ENCODE measurements at regions of chr5 and their contacts with region 1.

Region 1: GRCh38 chr5:16791036-16791705 is 144.9 kb downstream of the MYO10 start:
- DNase-seq: peak; percentile 55 to 66 (median 64)
- ATAC-seq: peak; percentile 75
- H3K4me3 ChIP-seq: no peak overlapping the region
- H3K27ac ChIP-seq: no peak overlapping the region
- H3K4me1 ChIP-seq: no peaks in the 10 kb centered on the region
- H3K27me3 ChIP-seq: peaks cover 0 to 12% of the 10 kb centered on the region in 2 experiments; a peak in 2 of 5 replicates
- CTCF ChIP-seq: peak; percentile 54 to 80 (median 62); a peak in 5 of 6 replicates
- EP300 ChIP-seq: no peak
- POLR2A ChIP-seq: no peak
- RAD21 ChIP-seq: peak; percentile 74 to 82

Region 2: GRCh38 chr5:16450163-16450562 is 341.0 kb before region 1 on chr5:
- CTCF ChIA-PET with region 1: no interaction called
- POLR2A ChIA-PET with region 1: no interaction called
- in situ Hi-C with region 1: no loop called
- intact Hi-C with region 1: no loop called
- DNase-seq: no peak
- ATAC-seq: no peak
- H3K4me3 ChIP-seq: no peak overlapping the region
- H3K27ac ChIP-seq: no peak overlapping the region
- H3K4me1 ChIP-seq: peaks cover 0 to 4% of the 10 kb centered on the region in 2 experiments; a peak in 2 of 5 replicates
- H3K27me3 ChIP-seq: no peaks in the 10 kb centered on the region
- CTCF ChIP-seq: no peak
- EP300 ChIP-seq: no peak
- POLR2A ChIP-seq: no peak
- RAD21 ChIP-seq: no peak

Region 3: GRCh38 chr5:16642862-16643261 is 148.3 kb before region 1 on chr5:
- CTCF ChIA-PET with region 1: no interaction called
- POLR2A ChIA-PET with region 1: no interaction called
- in situ Hi-C with region 1: no loop called
- intact Hi-C with region 1: no loop called
- DNase-seq: no peak
- ATAC-seq: no peak
- H3K4me3 ChIP-seq: no peak overlapping the region
- H3K27ac ChIP-seq: no peak overlapping the region
- H3K4me1 ChIP-seq: no peaks in the 10 kb centered on the region
- H3K27me3 ChIP-seq: no peaks in the 10 kb centered on the region; a peak in 1 of 5 replicates
- CTCF ChIP-seq: no peak
- EP300 ChIP-seq: no peak
- POLR2A ChIP-seq: no peak
- RAD21 ChIP-seq: no peak

Region 4: DNA sequence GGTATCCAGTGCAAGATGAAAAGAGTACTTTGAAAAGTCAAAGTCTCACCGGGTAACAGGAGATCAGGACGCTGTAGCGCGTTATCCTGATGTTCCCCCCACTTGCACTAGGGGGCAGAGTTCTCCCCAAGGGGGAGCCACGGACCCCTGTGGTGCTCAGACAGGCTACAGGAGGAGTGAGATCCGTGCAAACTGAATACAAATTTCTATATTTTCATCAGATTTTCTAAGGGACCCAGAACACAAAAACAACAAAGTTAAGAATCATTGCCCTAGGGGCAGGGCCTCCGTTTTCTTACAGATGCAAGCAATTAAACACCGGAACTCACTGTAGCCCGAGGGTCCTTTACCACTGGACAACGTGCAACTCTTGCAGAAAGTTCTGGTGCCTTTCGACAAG is 143.0 kb after region 1 on chr5:
- CTCF ChIA-PET with region 1: no interaction called
- POLR2A ChIA-PET with region 1: no interaction called
- in situ Hi-C with region 1: no loop called
- intact Hi-C with region 1: no loop called
- DNase-seq: peak; percentile 53 to 80 (median 70)
- ATAC-seq: peak; percentile 88
- H3K4me3 ChIP-seq: no peak overlapping the region
- H3K27ac ChIP-seq: no peak overlapping the region
- H3K4me1 ChIP-seq: peaks cover 0 to 13% of the 10 kb centered on the region in 2 experiments; a peak in 2 of 5 replicates
- H3K27me3 ChIP-seq: peaks cover 6 to 13% of the 10 kb centered on the region in 2 experiments; a peak in 2 of 5 replicates
- CTCF ChIP-seq: peak; percentile 61 to 76 (median 76)
- EP300 ChIP-seq: no peak
- POLR2A ChIP-seq: no peak
- RAD21 ChIP-seq: peak; percentile 29 to 41; a peak in 2 of 4 replicates

Region 5: DNA sequence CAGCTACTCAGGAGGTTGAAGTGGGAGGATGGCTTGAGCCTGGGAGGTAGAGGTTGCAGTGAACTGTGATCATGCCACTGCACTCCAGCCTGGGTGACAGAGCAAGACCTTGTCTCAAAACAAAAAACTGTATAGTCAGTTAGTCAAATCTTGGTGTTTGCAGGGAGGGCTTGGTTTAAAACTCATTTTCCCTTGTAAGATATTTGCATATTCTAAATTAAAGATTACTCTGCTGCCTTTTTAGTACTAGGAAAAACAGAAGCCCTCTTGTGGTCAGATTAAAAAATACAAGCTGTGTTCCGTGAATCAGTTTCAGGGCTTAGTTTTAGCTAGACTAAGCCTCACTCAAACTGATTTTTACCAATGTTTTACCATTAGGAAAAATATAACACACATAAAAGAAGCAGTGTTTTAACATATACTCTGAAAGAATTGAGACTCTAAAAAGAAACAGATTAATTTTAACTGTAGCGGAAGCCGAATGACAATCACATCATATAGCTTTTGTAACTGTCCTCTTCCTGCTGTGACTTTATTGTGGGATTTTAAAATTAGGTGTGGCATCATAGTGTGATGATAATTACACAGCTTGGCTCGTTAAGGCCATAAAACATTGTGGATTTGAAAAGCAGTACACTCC is 341.4 kb after region 1 on chr5:
- CTCF ChIA-PET with region 1: no interaction called
- POLR2A ChIA-PET with region 1: no interaction called
- in situ Hi-C with region 1: no loop called
- intact Hi-C with region 1: loop called (anchors 5 kb)
- DNase-seq: peak; percentile 27 to 49 (median 38)
- ATAC-seq: peak; percentile 62; the same call in 2 of the 3 replicates
- H3K4me3 ChIP-seq: no peak overlapping the region
- H3K27ac ChIP-seq: no peak overlapping the region
- H3K4me1 ChIP-seq: no peaks in the 10 kb centered on the region
- H3K27me3 ChIP-seq: peaks cover 6 to 10% of the 10 kb centered on the region in 2 experiments; a peak in 3 of 5 replicates
- CTCF ChIP-seq: peak; percentile 16 to 63 (median 44); a peak in 4 of 6 replicates
- EP300 ChIP-seq: no peak
- POLR2A ChIP-seq: no peak
- RAD21 ChIP-seq: peak; percentile 32 to 61

Region 6: DNA sequence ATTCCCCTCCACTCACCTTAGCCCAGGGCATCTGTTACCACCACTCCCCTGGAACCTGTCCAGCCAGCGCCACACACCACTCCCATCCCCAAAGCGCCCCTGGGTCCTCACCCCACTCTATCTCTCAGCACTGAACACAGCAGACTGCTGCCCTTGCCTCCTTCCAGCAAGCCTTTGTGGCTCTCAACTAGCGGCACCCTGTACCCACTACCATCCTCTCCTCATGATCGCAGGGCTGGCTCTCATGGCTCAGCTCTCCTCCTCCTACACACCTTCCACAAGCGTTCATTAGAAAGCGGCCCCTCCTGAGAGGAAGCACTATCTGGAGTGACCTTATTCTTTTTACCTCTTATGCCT is 412.9 kb after region 1 on chr5:
- CTCF ChIA-PET with region 1: interaction called, 11 read pairs
- POLR2A ChIA-PET with region 1: no interaction called
- in situ Hi-C with region 1: no loop called
- intact Hi-C with region 1: loop called (anchors 1 kb)
- DNase-seq: no peak
- ATAC-seq: no peak
- H3K4me3 ChIP-seq: no peak overlapping the region
- H3K27ac ChIP-seq: no peak overlapping the region
- H3K4me1 ChIP-seq: no peaks in the 10 kb centered on the region
- H3K27me3 ChIP-seq: no peaks in the 10 kb centered on the region; a peak in 1 of 5 replicates
- CTCF ChIP-seq: no peak
- EP300 ChIP-seq: no peak
- POLR2A ChIP-seq: no peak
- RAD21 ChIP-seq: no peak

Region 7: GRCh38 chr5:18305297-18305924 is 1514.2 kb after region 1 on chr5:
- CTCF ChIA-PET with region 1: no interaction called
- POLR2A ChIA-PET with region 1: no interaction called
- in situ Hi-C with region 1: loop called (anchors 25 kb)
- intact Hi-C with region 1: no loop called
- DNase-seq: peak; percentile 11 to 15 (median 13)
- ATAC-seq: no peak
- H3K4me3 ChIP-seq: no peak overlapping the region
- H3K27ac ChIP-seq: no peak overlapping the region
- H3K4me1 ChIP-seq: no peaks in the 10 kb centered on the region
- H3K27me3 ChIP-seq: no peaks in the 10 kb centered on the region
- CTCF ChIP-seq: peak; percentile 32 to 53 (median 50); a peak in 4 of 6 replicates
- EP300 ChIP-seq: no peak
- POLR2A ChIP-seq: no peak
- RAD21 ChIP-seq: peak; percentile 65 to 78